ENCODE measurements at regions of chrX and their contacts with region 1.

Region 1: DNA sequence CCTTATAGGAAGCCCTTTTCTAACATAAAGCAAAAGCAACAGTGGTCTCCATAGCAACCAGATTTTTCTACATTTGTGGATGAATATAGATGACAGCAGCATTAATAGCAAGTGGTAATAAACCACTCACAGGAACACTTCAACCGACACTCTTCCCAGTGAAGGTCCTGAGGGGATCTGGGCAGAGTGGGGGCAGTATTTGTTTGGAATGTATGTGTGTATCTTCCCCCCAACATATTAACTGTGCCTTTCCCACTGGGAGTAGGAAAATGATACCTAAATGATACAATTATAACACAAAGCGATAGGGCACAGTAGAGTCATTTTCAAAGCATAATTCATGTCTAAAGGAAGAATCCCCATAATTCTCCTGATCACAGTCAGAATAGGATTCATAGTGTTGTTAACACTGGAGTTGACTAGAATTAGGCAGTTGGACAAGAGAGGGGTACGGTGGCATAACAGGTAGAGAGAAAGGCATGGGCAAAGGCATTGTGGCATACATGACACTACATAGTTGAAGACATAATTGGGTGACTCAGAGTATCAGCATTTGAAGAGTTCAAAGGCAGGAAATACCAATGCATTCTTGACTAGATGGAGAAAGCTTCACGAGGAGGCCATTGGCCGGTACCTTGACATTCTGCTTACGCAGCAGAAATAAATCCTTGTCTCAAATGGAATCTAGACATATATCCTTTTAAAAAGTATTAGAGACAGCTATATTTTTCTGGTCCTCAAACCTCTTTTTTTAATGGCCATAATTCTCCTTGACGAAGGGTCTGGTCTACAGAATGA is 15.2 kb downstream of the CAPN6 start:
- DNase-seq: no peak
- H3K4me3 ChIP-seq: no peak overlapping the region
- H3K27ac ChIP-seq: no peak overlapping the region
- H3K4me1 ChIP-seq: no peaks in the 10 kb centered on the region
- H3K27me3 ChIP-seq: no peaks in the 10 kb centered on the region
- CTCF ChIP-seq: no peak

Region 2: GRCh38 chrX:110992611-110993010 is 262.5 kb before region 1 on chrX:
- intact Hi-C with region 1: loop called (anchors 5 kb)
- DNase-seq: no peak
- H3K4me3 ChIP-seq: no peak overlapping the region
- H3K27ac ChIP-seq: no peak overlapping the region
- H3K4me1 ChIP-seq: no peaks in the 10 kb centered on the region
- H3K27me3 ChIP-seq: no peaks in the 10 kb centered on the region
- CTCF ChIP-seq: peak in 2 of 3 experiments; percentile 35 to 44

Measured in ascending aorta (tissue), 2 donors.